Calu3 (cell line): ENCODE measurements at regions of chr18 and their contacts with region 1.

Region 1: DNA sequence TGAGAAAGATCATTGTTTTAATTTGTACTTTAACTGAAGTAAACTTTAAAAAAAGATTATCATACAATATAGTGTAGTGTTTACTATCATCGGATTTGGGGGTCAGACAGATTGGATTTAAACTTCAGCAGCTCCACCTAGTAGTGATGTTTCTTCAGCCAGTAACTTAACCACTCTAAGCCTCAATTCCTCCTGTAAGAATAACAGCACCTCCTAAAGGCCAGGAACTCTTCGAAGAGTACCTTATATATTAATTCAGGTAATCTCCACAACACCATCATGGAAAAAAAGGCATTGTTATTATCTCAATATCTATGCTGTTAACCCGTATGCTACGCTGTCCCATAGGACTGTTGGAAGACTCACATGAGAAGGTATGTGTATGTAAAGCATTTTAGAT is 69.0 kb upstream of the DLGAP1 start:
- DNase-seq: no peak
- H3K4me3 Mint-ChIP-seq: no peak overlapping the region
- H3K27ac Mint-ChIP-seq: no peak overlapping the region
- H3K4me1 Mint-ChIP-seq: no peaks in the 10 kb centered on the region
- H3K27me3 Mint-ChIP-seq: no peaks in the 10 kb centered on the region
- CTCF ChIP-seq: no peak

Region 2: GRCh38 chr18:4224031-4224704 is 299.9 kb before region 1 on chr18:
- CTCF ChIA-PET with region 1: no interaction called
- intact Hi-C with region 1: no loop called
- DNase-seq: no peak
- H3K4me3 Mint-ChIP-seq: no peak overlapping the region
- H3K27ac Mint-ChIP-seq: no peak overlapping the region
- H3K4me1 Mint-ChIP-seq: no peaks in the 10 kb centered on the region
- H3K27me3 Mint-ChIP-seq: peaks cover 15% of the 10 kb centered on the region
- CTCF ChIP-seq: no peak

Region 3: GRCh38 chr18:4589056-4589800 is 65.1 kb after region 1 on chr18:
- CTCF ChIA-PET with region 1: no interaction called
- intact Hi-C with region 1: loop called (anchors 2 kb)
- DNase-seq: no peak
- H3K4me3 Mint-ChIP-seq: no peak overlapping the region
- H3K27ac Mint-ChIP-seq: peak overlapping the region; percentile 100
- H3K4me1 Mint-ChIP-seq: peaks cover 38% of the 10 kb centered on the region
- H3K27me3 Mint-ChIP-seq: no peaks in the 10 kb centered on the region
- CTCF ChIP-seq: no peak